Breast epithelium (tissue), 4 donors: ENCODE measurements at regions of chr17 and their contacts with region 1.

Region 1: GRCh38 chr17:68512247-68512982 is at the start of gene PRKAR1A:
- DNase-seq: peak; percentile 91 to 94
- H3K4me3 ChIP-seq: peak within 1 kb of the TSS; percentile 73 to 98 (median 84)
- H3K27ac ChIP-seq: peak within 1 kb of the TSS; percentile 99
- H3K4me1 ChIP-seq: peaks cover 0 to 8% of the 10 kb centered on the region in 2 donors
- H3K27me3 ChIP-seq: no peaks in the 10 kb centered on the region
- CTCF ChIP-seq: peak in 2 of 3 donors; percentile 20 to 25
- POLR2A ChIP-seq: peak; percentile 80
- total RNA-seq, gene PRKAR1A: 331 to 432 (median 409) TPM

Region 2: GRCh38 chr17:68461589-68461988 is 50.8 kb before region 1 on chr17:
- intact Hi-C with region 1: loop called (anchors 2 kb)
- DNase-seq: no peak
- H3K4me3 ChIP-seq: no peak overlapping the region
- H3K27ac ChIP-seq: peak overlapping the region in 1 of 2 donors; percentile 2
- H3K4me1 ChIP-seq: no peaks in the 10 kb centered on the region
- H3K27me3 ChIP-seq: no peaks in the 10 kb centered on the region
- CTCF ChIP-seq: no peak
- POLR2A ChIP-seq: no peak

Region 3: DNA sequence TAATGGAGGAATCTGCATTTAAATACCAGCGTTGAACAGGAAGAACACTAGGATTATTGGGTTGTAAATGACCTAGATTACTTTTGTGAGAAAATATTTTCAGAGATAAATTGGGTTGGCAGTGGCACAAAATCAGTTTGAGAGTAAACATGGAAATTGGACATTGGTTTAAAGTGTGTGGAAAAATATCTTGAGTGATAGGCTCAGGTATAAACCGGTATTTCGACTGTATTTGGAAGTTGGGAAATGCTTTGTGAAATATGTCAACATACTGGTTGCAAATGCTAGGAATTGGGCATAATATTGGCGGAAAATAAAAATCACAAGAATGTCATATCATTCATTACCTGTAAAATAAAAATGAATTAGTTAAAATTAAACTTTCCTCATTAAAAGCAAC is 14.9 kb after region 1 on chr17:
- intact Hi-C with region 1: no loop called
- DNase-seq: no peak
- H3K4me3 ChIP-seq: no peak overlapping the region
- H3K27ac ChIP-seq: no peak overlapping the region
- H3K4me1 ChIP-seq: peaks cover 0 to 3% of the 10 kb centered on the region in 2 donors
- H3K27me3 ChIP-seq: no peaks in the 10 kb centered on the region
- CTCF ChIP-seq: no peak
- POLR2A ChIP-seq: no peak